Ascending aorta (tissue), 2 donors: ENCODE measurements at regions of chr10 and their contacts with region 1.

Region 1: DNA sequence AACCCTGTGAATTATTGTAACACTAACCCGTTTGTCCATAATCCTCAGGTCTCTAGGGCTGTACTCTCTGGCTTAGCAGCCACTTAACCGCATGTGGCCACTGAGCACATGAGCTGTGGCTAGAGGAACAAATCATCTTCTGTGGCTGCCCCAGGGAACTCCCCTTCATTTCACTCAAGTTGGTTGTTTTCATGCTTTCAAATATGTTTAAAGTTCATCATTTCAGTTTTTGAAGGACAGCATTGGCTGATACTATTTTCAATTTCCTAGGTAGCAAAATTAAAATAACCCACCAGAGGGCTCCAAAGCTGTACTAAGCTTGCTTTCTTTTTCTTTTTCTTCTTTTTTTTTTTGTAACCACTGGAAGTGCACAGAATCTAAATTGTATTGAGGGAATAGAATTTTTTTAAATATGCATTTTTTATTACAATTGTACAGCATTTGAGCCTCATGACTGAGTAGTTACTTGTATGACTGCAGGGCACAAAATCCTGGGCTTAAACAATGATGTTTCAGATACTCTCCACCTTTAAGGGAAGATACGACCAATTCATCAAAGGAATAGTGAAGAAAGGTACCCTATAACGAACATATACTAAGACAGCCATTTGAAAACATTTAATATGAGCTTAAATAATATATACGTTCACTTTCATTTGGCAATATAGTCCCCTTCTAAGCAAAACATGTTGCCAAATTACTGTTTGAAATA is 38.6 kb downstream of the MRC1 start:
- DNase-seq: no peak
- H3K4me3 ChIP-seq: no peak overlapping the region
- H3K27ac ChIP-seq: no peak overlapping the region
- H3K4me1 ChIP-seq: no peaks in the 10 kb centered on the region
- H3K27me3 ChIP-seq: no peaks in the 10 kb centered on the region
- CTCF ChIP-seq: peak in 2 of 3 experiments; percentile 37 to 56

Region 2: GRCh38 chr10:17175551-17175950 is 672.2 kb before region 1 on chr10:
- intact Hi-C with region 1: no loop called
- DNase-seq: no peak
- H3K4me3 ChIP-seq: peak overlapping the region; percentile 11 to 52
- H3K27ac ChIP-seq: peak overlapping the region; percentile 2 to 55
- H3K4me1 ChIP-seq: peaks cover 2 to 27% of the 10 kb centered on the region in 2 donors
- H3K27me3 ChIP-seq: no peaks in the 10 kb centered on the region
- CTCF ChIP-seq: no peak

Region 3: DNA sequence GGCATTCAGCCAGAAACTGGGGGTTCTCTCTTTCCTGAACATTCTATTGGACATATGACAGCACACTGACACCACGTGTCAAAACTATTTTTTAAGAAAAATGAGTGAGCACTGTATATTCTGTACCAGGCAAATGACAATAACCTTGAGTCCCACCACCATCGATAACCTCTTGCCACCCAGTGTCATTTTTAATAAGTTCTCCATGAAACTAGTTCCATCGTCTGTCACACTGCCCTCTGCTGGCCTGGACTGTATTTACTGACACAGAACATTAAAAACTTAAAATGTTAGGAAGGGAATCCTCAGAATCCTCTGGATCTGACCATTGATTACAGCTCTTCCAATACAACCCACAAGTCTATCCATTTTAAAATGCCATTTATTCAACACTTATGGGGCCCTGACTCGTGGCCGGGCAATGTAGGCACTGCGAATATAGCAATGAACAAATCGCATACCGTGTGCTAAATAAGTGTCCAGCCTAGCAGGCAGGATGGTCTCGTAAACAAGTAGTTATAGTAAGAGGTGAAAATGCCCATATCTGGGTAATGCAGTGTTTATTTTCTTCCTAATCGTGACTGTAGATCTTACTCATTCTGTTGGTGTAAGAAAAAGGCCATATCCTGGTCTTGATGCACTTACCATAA is 256.6 kb after region 1 on chr10:
- intact Hi-C with region 1: loop called (anchors 10 kb)
- DNase-seq: peak in 1 of 2 donors; percentile 70
- H3K4me3 ChIP-seq: peak overlapping the region in 1 of 2 donors; percentile 53
- H3K27ac ChIP-seq: no peak overlapping the region
- H3K4me1 ChIP-seq: no peaks in the 10 kb centered on the region
- H3K27me3 ChIP-seq: no peaks in the 10 kb centered on the region
- CTCF ChIP-seq: peak; percentile 39 to 72 (median 52)

Region 4: GRCh38 chr10:18214691-18215563 is 367.2 kb after region 1 on chr10:
- intact Hi-C with region 1: loop called (anchors 2 kb)
- DNase-seq: peak in 1 of 2 donors; percentile 72
- H3K4me3 ChIP-seq: no peak overlapping the region
- H3K27ac ChIP-seq: no peak overlapping the region
- H3K4me1 ChIP-seq: no peaks in the 10 kb centered on the region
- H3K27me3 ChIP-seq: no peaks in the 10 kb centered on the region
- CTCF ChIP-seq: peak; percentile 52 to 84 (median 81)

Region 5: DNA sequence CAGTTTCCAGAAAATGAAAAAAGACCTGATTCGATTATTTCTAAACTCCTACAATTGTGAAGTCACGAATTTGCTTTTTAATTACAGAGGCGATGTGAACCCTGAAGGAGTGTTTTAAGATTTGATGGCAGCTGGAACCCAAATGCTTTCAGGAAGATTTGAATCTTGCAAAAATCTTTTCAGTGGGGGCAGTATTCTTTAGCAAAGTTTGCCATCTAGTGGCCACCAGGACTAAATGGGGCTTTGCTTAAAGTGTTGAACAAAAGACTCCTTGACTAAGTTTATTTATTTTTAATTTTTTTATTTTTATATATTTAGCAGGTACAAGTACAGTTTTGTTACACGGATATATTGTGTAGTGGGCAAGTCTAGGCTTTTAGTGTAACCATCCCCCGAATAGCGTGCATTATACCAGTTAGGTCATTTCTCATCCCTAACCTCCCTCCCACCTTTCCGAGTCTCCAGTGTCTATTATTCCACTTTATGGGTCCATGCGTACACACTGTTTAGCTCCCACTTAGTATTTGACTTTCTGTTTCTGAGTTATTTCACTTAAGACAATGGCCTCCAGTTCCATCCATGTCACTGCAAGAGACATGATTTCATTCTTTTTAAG is 391.2 kb after region 1 on chr10:
- intact Hi-C with region 1: loop called (anchors 2 kb)
- DNase-seq: no peak
- H3K4me3 ChIP-seq: no peak overlapping the region
- H3K27ac ChIP-seq: no peak overlapping the region
- H3K4me1 ChIP-seq: peaks cover 0 to 21% of the 10 kb centered on the region in 2 donors
- H3K27me3 ChIP-seq: no peaks in the 10 kb centered on the region
- CTCF ChIP-seq: peak; percentile 19 to 69 (median 64)